HCT116 (cell line): ENCODE measurements at regions of chr12 and their contacts with region 1.

Region 1: GRCh38 chr12:13734584-13735152 is 246.7 kb downstream of the GRIN2B start:
- DNase-seq: no peak
- ATAC-seq: peak; percentile 57; the same call in 1 of the 2 replicates
- H3K4me3 ChIP-seq: no peak overlapping the region
- H3K27ac ChIP-seq: peak overlapping the region; percentile 52; the same call in 1 of the 2 replicates
- H3K4me1 ChIP-seq: peaks cover 3 to 17% of the 10 kb centered on the region in 2 experiments; a peak in 3 of 4 replicates
- H3K27me3 ChIP-seq: no peaks in the 10 kb centered on the region
- CTCF ChIP-seq: no peak
- POLR2A ChIP-seq: no peak
- RAD21 ChIP-seq: 0 out of 2 replicates have a peak, but pooled peaks have one; percentile 7

Region 2: GRCh38 chr12:12749433-12749832 is 985.2 kb before region 1 on chr12:
- CTCF ChIA-PET with region 1: no interaction called
- POLR2A ChIA-PET with region 1: no interaction called
- RAD21 ChIA-PET with region 1: no interaction called
- intact Hi-C with region 1: no loop called
- DNase-seq: no peak
- ATAC-seq: no peak
- H3K4me3 ChIP-seq: no peak overlapping the region
- H3K27ac ChIP-seq: no peak overlapping the region
- H3K4me1 ChIP-seq: peaks cover 5 to 14% of the 10 kb centered on the region in 2 experiments
- H3K27me3 ChIP-seq: no peaks in the 10 kb centered on the region
- CTCF ChIP-seq: no peak
- POLR2A ChIP-seq: no peak
- RAD21 ChIP-seq: no peak

Region 3: GRCh38 chr12:13347241-13348043 is 387.2 kb before region 1 on chr12:
- CTCF ChIA-PET with region 1: no interaction called
- POLR2A ChIA-PET with region 1: no interaction called
- RAD21 ChIA-PET with region 1: no interaction called
- intact Hi-C with region 1: loop called (anchors 10 kb)
- DNase-seq: peak; percentile 27
- ATAC-seq: peak; percentile 74
- H3K4me3 ChIP-seq: no peak overlapping the region
- H3K27ac ChIP-seq: no peak overlapping the region
- H3K4me1 ChIP-seq: peaks cover 6 to 33% of the 10 kb centered on the region in 2 experiments
- H3K27me3 ChIP-seq: no peaks in the 10 kb centered on the region
- CTCF ChIP-seq: peak in 1 of 3 experiments; percentile 21; a peak in 1 of 6 replicates
- POLR2A ChIP-seq: no peak
- RAD21 ChIP-seq: no peak

Region 4: DNA sequence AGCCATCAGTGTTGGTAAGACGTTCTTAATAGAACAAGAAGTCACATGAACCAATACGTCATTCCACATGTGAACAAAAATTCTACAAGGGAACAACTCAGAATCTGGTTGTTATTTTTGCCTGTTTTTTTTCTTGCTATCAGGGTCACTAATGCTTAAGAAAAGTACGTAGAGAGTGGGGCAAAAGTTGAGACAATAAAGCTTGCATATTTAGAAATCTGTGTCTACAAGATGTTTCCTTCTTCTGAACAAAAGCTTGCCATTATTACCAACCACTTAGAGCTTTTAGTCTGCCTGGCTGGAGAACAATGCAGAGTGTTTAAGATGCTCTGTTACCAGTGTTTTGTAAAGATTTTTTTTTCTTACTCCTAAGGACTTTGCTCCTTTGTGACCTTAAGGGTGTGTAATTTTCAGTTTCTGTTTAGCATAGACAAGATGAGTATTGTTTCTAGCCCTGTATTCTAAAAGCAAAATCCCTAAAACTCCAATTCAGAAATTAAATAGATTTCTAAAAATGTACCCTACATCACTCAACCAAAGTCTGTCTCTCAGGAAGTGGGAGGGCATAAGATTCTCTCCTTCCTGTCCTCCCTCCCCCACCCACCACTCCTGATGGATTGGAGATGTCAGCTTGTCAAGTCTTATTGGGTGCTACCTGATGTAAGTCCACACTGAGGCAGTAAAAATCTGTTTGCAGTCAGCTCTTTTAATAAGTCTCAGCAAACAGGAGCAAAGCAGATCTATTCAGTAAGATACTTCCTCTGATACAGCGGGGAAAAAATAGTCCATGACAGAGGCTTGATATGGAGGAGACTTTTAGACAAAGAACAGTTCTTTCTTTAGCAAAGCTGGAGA is 20.9 kb before region 1 on chr12:
- CTCF ChIA-PET with region 1: no interaction called
- POLR2A ChIA-PET with region 1: no interaction called
- RAD21 ChIA-PET with region 1: no interaction called
- intact Hi-C with region 1: no loop called
- DNase-seq: no peak
- ATAC-seq: no peak
- H3K4me3 ChIP-seq: no peak overlapping the region
- H3K27ac ChIP-seq: no peak overlapping the region
- H3K4me1 ChIP-seq: peaks cover 0 to 2% of the 10 kb centered on the region in 2 experiments; a peak in 2 of 4 replicates
- H3K27me3 ChIP-seq: no peaks in the 10 kb centered on the region
- CTCF ChIP-seq: no peak
- POLR2A ChIP-seq: no peak
- RAD21 ChIP-seq: no peak